ENCODE measurements at regions of chr9 and their contacts with region 1.

Region 1: DNA sequence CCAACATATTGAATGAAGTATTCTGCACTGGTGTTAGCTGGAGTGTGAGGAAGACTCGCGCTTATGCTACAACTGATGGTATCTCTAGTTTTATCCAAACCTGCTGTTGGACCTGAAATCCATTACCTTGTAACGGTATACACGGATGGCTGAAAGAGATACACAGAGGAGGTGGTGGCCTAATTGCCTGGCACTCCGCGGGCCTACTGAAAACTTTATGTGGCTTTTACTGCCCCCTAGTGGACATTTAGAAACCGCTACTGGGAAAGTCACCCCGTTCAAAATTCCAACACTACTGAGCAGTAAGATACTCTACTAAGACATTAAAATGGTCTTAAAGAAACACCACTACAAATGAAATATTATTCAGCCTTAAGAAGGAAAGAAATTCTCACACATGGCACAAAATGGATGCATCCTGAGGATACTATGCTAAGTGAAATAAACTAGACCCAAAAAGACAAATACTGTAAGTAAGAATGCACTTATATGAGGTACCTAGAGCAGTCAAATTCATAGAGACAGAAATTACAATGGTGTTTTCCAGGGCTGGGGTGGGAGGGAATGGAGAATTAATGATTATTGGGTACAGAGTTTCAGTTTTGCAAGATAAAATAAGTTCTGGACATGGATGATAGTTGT is 100.4 kb downstream of the TTLL11 start:
- DNase-seq: peak; percentile 60 to 80 (median 76)
- ATAC-seq: peak; percentile 81
- H3K4me3 ChIP-seq: no peak overlapping the region
- H3K27ac ChIP-seq: no peak overlapping the region
- H3K4me1 ChIP-seq: peaks cover 19% of the 10 kb centered on the region
- H3K27me3 ChIP-seq: no peaks in the 10 kb centered on the region
- CTCF ChIP-seq: peak; percentile 68 to 94 (median 84)
- POLR2A ChIP-seq: no peak

Region 2: GRCh38 chr9:121545875-121546423 is 446.7 kb before region 1 on chr9:
- intact Hi-C with region 1: loop called (anchors 10 kb)
- DNase-seq: peak; percentile 95 to 98 (median 98)
- ATAC-seq: peak; percentile 95
- H3K4me3 ChIP-seq: no peak overlapping the region
- H3K27ac ChIP-seq: peak overlapping the region in 1 of 4 donors; percentile 41
- H3K4me1 ChIP-seq: peaks cover 19% of the 10 kb centered on the region
- H3K27me3 ChIP-seq: no peaks in the 10 kb centered on the region
- CTCF ChIP-seq: peak; percentile 93 to 98 (median 96)
- POLR2A ChIP-seq: peak in 1 of 3 donors; percentile 31

Region 3: DNA sequence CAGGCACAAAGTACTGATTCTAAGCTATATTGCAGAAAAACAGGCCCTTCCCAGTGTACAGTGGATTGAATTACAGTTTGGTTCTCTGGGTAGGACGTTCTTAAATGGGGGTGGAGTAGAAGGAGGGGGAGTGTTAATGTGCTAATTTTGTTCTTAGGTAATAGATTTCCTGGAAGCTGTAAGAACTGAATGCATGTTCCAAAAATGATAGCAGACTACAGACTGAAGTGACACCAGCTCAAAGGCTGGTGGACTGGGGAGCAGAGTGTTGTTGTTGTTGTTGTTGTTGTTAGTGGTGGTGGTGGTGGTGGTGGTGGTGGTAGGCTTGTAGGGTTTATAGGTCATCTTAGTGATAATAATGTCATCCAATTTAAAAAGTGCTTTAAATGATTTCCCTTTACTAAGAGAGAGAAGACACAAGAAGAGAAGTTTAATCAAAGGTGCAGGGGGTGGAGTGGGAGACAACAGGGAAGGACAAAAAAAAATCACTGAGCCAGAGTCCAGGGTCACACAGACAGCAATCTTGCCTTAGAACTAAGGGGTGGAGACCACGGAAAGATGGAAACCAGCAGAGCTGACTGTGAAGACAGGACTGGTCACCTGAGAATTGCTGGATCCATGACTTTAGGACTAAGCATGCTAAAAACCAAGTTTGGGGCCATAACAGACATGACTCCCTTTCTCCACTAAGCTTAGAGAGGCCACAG is 73.4 kb after region 1 on chr9:
- intact Hi-C with region 1: no loop called
- DNase-seq: no peak
- ATAC-seq: peak; percentile 65
- H3K4me3 ChIP-seq: no peak overlapping the region
- H3K27ac ChIP-seq: peak overlapping the region in 1 of 4 donors; percentile 37
- H3K4me1 ChIP-seq: peaks cover 21% of the 10 kb centered on the region
- H3K27me3 ChIP-seq: no peaks in the 10 kb centered on the region
- CTCF ChIP-seq: no peak
- POLR2A ChIP-seq: no peak